ENCODE measurements at regions of chr4 and their contacts with region 1.

Region 1: DNA sequence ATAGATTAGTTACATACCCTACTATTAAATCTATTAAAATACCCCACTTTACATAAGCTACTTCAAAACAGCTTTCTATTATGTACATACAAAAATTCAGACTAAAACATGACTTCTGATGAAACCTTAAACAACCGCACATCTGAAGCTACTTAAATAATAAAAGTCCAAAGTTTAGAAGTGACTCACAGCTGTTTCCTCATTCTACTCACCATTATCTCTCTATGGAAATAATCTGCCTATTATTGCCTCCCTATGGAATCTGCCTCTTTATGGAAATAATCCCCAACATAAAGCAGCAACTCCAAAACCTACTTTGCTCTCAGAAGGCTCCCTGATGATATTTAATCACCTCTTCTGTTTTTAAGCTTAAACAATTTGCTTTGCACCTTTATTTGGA is 15.7 kb upstream of the BANK1 start:
- DNase-seq: no peak
- H3K4me3 ChIP-seq: no peak overlapping the region
- H3K27ac ChIP-seq: no peak overlapping the region
- H3K4me1 ChIP-seq: no peaks in the 10 kb centered on the region
- H3K27me3 ChIP-seq: no peaks in the 10 kb centered on the region
- CTCF ChIP-seq: no peak
- EP300 ChIP-seq: no peak
- POLR2A ChIP-seq: no peak

Region 2: DNA sequence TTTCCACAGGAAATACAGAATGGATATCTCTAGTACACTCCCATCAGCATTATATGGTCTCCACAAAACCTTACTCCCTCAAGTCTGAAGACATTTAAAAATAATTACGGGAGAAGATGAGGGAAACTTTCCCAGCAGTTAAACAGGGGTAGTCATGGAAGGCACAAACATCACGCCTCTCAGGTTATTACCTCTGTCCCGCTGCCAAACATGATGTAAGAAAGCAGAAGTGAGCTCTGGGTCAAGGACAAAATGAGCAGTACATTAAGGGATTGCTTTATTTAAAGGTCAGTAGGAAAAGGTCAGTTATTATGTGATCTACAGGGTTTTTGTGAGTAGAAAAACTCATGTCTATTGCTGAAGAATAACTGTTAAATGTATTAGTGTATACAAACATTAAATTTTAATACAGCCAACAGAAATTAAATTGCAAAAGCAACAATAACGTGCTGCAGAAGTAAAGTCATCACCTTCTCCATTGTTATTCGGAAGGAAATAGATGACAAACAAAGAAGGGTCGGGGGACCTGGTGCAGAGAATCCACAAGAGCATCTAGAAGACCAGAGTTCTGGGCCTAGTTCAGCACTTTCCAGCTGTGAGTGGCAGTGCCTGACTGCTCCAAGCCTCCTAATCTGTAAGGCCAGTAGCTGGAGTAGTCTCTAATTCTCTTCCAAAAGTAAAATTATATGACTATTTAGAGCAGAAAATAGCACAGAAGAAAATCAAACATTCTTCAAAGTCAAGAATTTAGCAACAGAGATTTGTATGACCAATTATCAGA is 598.7 kb before region 1 on chr4:
- in situ Hi-C with region 1: no loop called
- intact Hi-C with region 1: no loop called
- DNase-seq: peak; percentile 53
- H3K4me3 ChIP-seq: no peak overlapping the region
- H3K27ac ChIP-seq: peak overlapping the region; percentile 14 to 64 (median 38)
- H3K4me1 ChIP-seq: peaks cover 0 to 35% (median 14%) of the 10 kb centered on the region in 4 donors
- H3K27me3 ChIP-seq: no peaks in the 10 kb centered on the region
- CTCF ChIP-seq: no peak
- EP300 ChIP-seq: peak; percentile 53
- POLR2A ChIP-seq: no peak

Region 3: DNA sequence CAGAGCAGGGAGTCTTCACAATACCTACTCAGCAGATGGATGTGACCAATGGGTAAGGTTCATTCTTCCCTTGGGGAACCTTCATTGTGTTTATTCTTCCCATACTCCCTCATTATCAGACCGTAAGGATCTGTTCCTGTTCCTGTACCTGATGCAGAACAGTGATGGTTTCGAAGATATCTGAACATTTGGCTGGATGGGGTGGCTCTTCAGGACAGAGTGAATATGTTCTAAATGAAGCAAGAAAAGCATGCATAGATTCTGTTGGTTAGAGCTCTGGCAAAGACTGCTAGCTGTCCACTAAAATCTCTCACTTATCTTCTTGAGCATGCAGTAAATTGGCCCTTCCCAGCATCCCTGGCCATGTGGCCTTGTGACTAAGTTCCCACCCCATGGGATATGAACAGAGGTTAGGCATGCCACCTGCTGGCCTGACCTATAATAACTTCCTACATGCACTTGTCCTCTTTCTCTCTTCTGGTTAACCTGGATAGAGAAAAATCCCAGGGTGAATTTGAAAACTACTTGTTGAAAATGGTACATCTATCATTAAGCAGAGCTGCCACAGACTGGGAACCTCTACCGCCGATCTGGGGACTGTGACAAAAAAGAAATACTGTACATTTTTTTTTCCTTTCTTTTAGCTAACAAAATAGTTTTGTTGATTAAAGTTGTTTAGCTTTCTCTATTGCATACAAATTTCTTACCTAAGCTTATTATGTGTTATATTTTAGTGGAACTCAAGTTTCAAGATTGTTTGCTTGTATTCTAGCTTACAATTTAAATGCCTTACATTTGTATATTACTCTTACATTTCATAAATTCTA is 44.3 kb before region 1 on chr4:
- in situ Hi-C with region 1: no loop called
- intact Hi-C with region 1: no loop called
- DNase-seq: peak; percentile 69
- H3K4me3 ChIP-seq: no peak overlapping the region
- H3K27ac ChIP-seq: no peak overlapping the region
- H3K4me1 ChIP-seq: no peaks in the 10 kb centered on the region
- H3K27me3 ChIP-seq: no peaks in the 10 kb centered on the region
- CTCF ChIP-seq: peak; percentile 55 to 78 (median 66)
- EP300 ChIP-seq: no peak
- POLR2A ChIP-seq: no peak

Region 4: DNA sequence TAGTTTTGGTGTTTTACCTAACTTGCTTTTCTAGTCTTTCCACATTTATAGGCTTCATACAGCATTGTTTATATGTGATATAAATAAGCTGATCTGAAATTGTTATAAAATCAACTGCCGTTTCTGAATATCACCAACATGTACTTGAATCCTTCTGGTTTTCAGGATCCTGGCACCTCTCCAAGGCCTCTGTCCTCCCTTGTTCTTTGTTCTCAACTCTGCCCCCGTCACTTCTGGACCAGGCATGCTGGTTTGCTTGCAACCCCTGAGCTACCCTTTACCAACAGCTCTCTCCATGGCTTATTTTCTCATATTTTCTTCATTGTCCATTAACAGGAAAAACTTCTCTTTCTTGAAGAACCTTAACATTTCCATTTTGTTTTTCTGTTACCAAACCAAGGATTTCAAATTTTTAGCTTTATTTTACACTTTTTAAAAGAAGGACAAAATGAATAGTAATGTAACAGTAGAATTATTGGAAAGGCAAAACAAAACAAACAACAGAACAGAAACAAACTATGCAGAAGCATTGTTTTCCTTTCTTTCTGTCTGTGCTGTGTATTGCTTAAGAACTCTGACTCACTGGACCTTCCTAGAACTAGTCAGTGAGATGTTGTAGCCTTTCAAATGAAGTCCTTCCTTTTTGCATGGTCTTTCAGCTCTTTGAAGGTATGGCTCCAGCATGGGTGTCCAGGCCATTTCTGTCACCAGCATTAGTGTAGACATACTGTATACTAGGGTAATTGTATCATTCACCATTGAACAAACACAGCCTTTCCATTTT is 60.5 kb after region 1 on chr4:
- in situ Hi-C with region 1: loop called in 1 of 4 experiments (anchors 10 kb)
- intact Hi-C with region 1: no loop called
- DNase-seq: no peak
- H3K4me3 ChIP-seq: no peak overlapping the region
- H3K27ac ChIP-seq: no peak overlapping the region
- H3K4me1 ChIP-seq: peaks cover 0 to 6% (median 0%) of the 10 kb centered on the region in 4 donors
- H3K27me3 ChIP-seq: no peaks in the 10 kb centered on the region
- CTCF ChIP-seq: no peak
- EP300 ChIP-seq: no peak
- POLR2A ChIP-seq: no peak